ENCODE measurements at regions of chr3 and their contacts with region 1.

Region 1: DNA sequence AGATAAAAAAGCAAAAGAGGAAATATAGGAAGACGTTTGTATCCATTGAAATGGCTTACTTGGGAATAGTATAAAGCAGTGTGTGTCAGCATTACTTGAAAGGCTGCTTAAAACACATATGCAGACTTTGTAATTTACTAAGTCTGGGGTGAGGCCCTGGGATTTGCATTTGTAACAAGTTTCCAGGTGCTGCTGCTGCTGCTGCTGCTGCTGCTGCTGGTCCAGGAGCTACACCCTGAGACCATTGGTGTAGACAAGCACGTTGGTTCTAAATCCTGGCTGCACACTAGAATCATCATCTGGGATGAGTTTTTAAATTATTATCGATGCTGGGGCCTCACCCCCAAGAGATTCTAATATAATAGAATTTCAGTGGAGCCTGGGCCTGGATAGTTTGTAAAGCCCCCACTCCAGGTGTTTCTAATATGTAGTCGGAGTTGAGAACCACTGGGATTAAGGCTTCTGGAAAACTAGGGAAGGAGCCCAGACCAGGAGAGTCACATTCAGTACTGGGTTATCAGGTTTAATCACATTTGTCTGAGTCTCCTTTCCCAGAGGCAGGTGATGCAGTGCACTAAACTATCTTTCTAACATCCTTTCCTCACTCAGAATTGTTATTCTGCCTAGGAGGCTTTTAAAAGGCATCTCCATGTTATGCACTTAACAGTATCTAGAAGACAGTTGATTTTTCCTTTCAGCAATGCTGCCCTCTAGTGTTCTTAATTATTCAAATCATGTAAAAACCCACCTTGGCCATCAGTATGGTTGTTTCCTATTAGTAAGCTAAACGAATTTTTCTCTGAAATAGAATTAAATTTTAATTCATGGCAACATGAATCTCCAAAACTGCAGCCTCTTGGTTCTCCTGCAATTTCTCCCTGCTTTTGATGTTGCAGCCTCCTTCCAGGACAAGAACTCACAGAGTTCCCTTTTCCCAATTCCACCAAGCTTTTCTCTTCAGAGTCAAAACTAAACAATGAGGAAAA is 45.4 kb downstream of the SSR3 start:
- DNase-seq: peak; percentile 74
- H3K4me3 Mint-ChIP-seq: no peak overlapping the region
- H3K27ac Mint-ChIP-seq: no peak overlapping the region
- H3K4me1 Mint-ChIP-seq: peaks cover 15% of the 10 kb centered on the region
- H3K27me3 Mint-ChIP-seq: peaks cover 37% of the 10 kb centered on the region

Region 2: GRCh38 chr3:156106721-156107373 is 402.6 kb before region 1 on chr3:
- intact Hi-C with region 1: no loop called
- DNase-seq: no peak
- H3K4me3 Mint-ChIP-seq: no peak overlapping the region
- H3K27ac Mint-ChIP-seq: no peak overlapping the region
- H3K4me1 Mint-ChIP-seq: no peaks in the 10 kb centered on the region
- H3K27me3 Mint-ChIP-seq: peaks cover 6% of the 10 kb centered on the region

Region 3: DNA sequence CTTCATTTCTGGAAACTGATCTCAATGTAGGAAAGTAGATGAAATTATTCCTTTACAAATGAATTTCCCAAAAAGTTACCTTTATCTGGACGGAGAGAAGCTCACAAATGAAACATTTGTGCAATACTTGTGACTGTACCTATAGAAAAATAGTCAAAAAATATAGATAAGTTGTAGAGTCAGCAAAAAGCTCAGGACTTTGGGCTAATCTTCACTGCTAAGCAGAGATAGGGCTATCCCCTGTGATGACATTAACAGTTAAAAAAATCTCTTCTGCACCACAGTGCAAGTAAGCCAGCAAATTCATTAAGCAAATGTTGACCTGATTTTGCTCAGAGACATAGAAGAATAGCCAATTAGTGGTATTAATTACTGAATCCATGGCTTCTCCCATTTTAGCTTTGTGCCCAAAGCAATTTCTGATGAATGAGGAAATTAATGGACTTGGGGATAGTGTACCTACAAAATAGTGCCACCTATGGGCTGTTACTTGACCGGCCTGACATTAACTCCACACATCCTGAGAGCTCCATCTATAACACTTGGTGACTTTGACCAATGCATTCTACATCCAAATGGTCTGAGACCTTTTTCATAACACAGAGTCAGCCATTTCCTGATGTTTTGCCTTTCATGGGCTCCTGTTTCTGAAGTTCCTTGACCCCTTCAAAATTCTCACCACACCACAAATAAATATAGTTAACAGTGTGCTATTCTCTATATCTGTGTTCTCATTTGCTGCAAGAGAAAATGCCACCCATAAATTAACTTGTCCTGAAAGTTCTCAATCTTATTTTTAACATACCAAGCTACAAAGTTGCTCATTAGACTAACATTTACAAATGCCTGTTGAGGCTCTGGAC is 59.5 kb before region 1 on chr3:
- intact Hi-C with region 1: loop called (anchors 2 kb)
- DNase-seq: peak; percentile 60
- H3K4me3 Mint-ChIP-seq: no peak overlapping the region
- H3K27ac Mint-ChIP-seq: no peak overlapping the region
- H3K4me1 Mint-ChIP-seq: no peaks in the 10 kb centered on the region
- H3K27me3 Mint-ChIP-seq: peaks cover 46% of the 10 kb centered on the region

Region 4: GRCh38 chr3:156472150-156472549 is 37.3 kb before region 1 on chr3:
- intact Hi-C with region 1: loop called (anchors 1 kb)
- DNase-seq: peak; percentile 67
- H3K4me3 Mint-ChIP-seq: no peak overlapping the region
- H3K27ac Mint-ChIP-seq: no peak overlapping the region
- H3K4me1 Mint-ChIP-seq: peaks cover 2% of the 10 kb centered on the region
- H3K27me3 Mint-ChIP-seq: peaks cover 55% of the 10 kb centered on the region

Region 5: DNA sequence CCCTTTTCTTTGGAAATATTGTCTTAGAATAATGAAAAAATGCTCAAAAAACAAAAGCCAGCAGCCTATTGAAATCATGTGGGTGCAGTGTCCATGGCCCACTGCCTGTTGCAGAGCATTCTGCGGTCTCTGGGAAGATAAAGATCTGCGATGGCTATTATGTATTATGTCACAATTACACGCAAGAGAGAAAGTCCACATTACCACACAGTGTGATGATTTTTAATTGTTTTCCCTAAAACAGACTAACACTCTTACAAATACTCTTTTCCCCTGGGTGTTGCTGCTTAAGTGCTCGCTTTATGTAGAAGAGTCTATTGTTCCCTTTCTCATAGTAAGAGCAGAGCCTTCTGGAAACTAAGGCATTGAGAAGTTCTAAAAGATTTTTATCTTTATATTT is 13.2 kb after region 1 on chr3:
- intact Hi-C with region 1: no loop called
- DNase-seq: no peak
- H3K4me3 Mint-ChIP-seq: no peak overlapping the region
- H3K27ac Mint-ChIP-seq: no peak overlapping the region
- H3K4me1 Mint-ChIP-seq: peaks cover 26% of the 10 kb centered on the region
- H3K27me3 Mint-ChIP-seq: peaks cover 55% of the 10 kb centered on the region

Region 6: DNA sequence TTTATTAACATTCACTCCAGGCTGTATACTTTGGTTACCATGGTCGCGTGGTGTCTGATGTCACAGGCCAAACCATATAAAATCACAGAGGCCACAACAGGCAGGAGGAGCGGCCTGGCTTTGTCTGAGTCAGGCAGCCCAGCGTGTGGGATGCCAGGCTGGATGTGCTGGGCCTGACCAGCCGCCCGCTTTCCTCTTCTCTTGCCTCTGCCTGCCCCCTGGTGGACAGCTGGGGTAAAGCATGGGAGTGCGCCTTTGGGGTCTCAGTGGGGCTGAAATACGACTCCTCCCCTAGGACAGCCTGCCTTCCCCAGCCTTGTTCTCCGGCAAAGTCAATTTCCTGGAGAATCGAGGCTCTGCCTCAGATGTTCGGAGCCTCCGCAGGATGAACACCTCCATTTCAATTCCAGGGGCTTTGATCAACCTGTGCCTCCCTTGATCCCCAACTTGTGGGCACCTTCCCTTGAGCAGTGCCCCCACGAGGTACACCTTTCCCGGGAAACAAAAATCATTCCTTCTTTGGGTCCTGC is 572.3 kb after region 1 on chr3:
- intact Hi-C with region 1: no loop called
- DNase-seq: peak; percentile 95
- H3K4me3 Mint-ChIP-seq: no peak overlapping the region
- H3K27ac Mint-ChIP-seq: peak overlapping the region; percentile 18
- H3K4me1 Mint-ChIP-seq: peaks cover 45% of the 10 kb centered on the region
- H3K27me3 Mint-ChIP-seq: no peaks in the 10 kb centered on the region

Measured in activated CD4-positive, alpha-beta T cell treated with anti-CD3 and anti-CD28 coated beads, Interleukin-2, amount 10 ng/mL, durations not matched to agents 24 days and 14 days (primary cell).